Mucosa of descending colon (tissue), 3 donors: ENCODE measurements at regions of chr1 and their contacts with region 1.

Region 1: DNA sequence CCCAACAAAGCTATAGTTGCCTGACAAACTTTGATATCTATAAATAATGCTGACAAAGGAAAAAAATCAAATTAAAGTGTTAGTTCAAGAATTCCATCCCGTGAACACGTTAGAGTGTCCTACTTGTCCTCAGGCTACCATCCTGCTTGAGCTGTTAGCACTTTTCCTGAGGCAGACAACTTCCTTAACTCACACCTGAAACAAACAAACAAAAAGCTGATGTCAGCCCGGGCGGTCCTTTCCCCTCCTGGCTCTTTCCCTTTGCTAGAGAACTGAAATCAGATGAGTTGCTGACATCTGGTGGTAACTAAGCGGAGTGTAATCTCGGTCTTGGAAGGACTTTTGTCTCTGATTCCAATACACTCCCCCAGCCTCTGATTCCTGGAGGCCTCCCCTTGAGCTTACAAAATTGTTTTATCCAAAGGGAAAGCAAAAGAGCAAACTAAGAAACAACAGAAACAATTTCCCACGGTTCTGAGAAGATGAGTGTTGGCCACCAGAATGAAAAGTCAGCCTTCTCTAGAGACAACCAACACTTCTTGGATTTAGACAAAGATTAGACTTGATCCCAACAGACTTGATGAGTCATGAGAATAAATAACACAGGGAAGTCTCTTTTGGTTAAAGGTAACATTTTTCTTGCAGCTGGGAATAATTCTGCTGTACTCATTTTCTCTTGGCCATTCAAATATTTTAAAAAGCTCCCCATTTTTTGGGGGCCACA is 135.4 kb downstream of the PROX1 start:
- DNase-seq: peak in 2 of 3 donors; percentile 57 to 68
- ATAC-seq: peak; percentile 95
- H3K4me3 ChIP-seq: no peak overlapping the region
- H3K4me1 ChIP-seq: no peaks in the 10 kb centered on the region
- CTCF ChIP-seq: no peak

Region 2: DNA sequence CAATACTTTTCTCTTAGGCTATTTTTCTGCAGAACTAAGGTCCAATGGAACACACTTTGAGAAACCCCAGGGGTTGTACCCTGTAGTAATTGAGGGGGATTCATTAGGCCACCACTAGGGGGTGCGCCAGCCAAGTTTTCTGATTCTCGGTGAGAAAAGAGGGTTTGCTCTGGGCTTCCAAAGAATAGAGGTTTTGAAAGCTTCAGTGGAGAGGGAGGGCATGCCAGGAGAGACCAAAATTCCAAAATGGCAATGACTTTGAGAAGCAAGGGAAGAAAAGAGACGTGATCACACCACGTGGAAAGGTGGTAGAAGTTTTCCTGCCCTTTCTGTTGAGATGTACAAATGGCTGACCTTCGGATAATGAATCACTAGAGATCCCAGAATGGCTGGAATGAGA is 748.9 kb before region 1 on chr1:
- intact Hi-C with region 1: loop called (anchors 5 to 10 kb)
- DNase-seq: peak in 2 of 3 donors; percentile 64 to 74
- ATAC-seq: peak; percentile 72
- H3K4me3 ChIP-seq: no peak overlapping the region
- H3K4me1 ChIP-seq: no peaks in the 10 kb centered on the region
- CTCF ChIP-seq: peak; percentile 58

Region 3: DNA sequence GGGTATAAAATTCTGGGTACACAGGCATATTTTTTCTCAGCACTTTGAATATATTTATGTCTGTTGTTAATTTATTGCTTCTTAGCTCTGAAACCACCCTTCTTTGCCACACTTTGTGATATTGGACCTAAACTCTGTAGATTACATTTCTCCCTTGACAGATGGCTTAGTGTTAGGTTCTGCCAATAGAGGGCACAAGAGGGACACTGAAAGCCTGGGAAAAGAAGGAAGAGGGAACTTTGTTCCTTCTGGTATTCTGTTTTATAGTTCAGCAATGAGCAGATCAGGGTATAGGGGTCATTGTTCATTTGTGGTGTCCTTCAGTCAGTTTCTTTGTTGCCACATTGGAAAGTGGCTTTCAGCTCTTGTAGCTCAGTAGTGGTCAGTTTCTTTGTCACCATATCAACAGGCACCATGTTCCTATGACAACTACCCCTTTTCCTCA is 559.0 kb before region 1 on chr1:
- intact Hi-C with region 1: loop called in 1 of 2 experiments (anchors 5 kb)
- DNase-seq: peak in 1 of 3 donors; percentile 75
- ATAC-seq: peak; percentile 98
- H3K4me3 ChIP-seq: no peak overlapping the region
- H3K4me1 ChIP-seq: no peaks in the 10 kb centered on the region
- CTCF ChIP-seq: peak; percentile 23

Region 4: GRCh38 chr1:214281021-214281719 is 157.9 kb after region 1 on chr1 and contains the start of gene SMYD2:
- intact Hi-C with region 1: no loop called
- DNase-seq: peak; percentile 81 to 88 (median 82)
- ATAC-seq: peak; percentile 87
- H3K4me3 ChIP-seq: peak within 1 kb of the TSS; percentile 57
- H3K4me1 ChIP-seq: no peaks in the 10 kb centered on the region
- CTCF ChIP-seq: no peak
- total RNA-seq, gene SMYD2: 15.9 to 23.4 (median 18.6) TPM

Region 5: DNA sequence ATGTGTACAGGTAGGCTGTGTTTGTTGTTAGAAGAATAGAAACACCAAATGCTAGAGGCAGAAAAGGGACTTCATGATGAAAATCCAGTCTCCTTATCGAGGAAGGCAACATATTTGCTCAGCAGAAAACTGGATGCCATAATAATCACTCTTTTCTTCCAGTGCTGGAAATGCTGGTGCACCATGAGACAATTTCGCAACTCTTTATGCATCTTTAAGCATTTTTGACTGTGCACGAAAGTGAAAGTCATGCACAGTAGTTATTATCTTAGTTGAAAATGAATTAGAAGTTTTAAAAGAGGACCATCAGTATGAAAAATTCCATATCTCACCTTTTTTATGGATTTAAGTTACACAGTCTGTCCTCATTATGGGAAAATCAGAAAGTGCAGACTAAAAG is 186.8 kb after region 1 on chr1:
- intact Hi-C with region 1: no loop called
- DNase-seq: no peak
- ATAC-seq: no peak
- H3K4me3 ChIP-seq: no peak overlapping the region
- H3K4me1 ChIP-seq: no peaks in the 10 kb centered on the region
- CTCF ChIP-seq: no peak